ENCODE measurements at regions of chr17 and their contacts with region 1.

Region 1: DNA sequence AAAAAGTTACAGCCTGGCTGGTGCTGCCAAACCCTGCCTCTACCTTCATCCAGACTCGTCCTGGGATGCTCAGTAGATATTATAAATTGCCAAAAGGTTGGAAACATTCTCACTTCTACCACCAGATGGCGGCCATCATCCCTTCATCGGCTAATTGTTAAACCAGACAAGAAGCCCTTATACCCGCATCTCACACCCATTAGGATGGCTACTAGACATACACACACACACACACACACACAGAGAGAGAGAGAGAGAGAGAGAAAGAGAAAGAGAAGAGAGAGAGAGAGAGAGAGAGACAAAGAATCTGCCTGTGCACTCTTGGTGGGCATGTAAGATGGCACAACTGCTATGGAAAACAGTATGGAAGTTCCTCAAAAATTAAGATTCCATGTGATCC is 15.0 kb upstream of the SCIMP start:
- DNase-seq: peak in 4 of 5 donors; percentile 30 to 56 (median 42)
- ATAC-seq: peak in 3 of 4 donors; percentile 58 to 75 (median 68)
- H3K4me3 ChIP-seq: no peak overlapping the region
- H3K27ac ChIP-seq: no peak overlapping the region
- H3K4me1 ChIP-seq: no peaks in the 10 kb centered on the region
- H3K27me3 ChIP-seq: no peaks in the 10 kb centered on the region
- CTCF ChIP-seq: peak; percentile 42 to 71 (median 53)
- POLR2A ChIP-seq: no peak

Region 2: DNA sequence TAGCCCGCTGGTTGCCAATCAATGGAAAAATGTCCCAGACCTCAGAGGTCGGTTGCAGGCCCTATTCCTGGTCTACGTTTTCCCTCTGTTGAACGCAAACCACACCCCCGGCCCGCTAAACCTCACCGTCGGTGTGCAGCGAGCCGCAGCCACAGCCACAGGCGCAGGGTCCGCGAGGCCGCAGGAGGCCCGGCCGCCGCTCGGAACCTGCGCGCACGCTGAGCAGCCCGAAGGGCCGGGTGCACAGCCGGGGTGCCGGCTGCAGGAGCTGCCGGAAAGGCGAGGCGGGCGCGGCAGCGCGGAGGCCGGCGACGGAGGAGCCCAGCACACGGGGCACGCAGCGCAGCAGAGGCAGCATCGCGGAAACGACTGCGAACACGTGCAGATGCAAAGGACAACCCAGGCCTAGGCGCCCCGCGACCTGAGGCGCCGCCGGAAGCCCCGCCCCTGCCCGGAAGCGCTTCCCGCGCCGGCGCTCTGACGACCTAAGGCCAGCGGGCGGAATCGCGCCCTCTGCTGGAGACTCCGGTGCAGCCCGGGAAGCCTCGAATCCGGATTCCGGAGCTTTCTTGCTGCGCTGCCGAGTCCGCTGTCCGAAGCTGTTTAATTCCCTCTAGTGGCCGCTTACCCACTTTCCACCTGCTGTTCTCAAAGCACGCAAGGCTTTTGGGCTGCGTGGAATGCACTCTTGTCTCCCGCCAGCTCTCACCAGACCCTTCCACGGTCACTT is 189.3 kb after region 1 on chr17 and contains the start of gene C1QBP:
- intact Hi-C with region 1: loop called in 4 of 10 experiments (anchors 1 to 10 kb)
- DNase-seq: peak; percentile 90 to 94 (median 92)
- ATAC-seq: peak; percentile 92 to 98 (median 96)
- H3K4me3 ChIP-seq: peak within 1 kb of the TSS; percentile 60 to 100 (median 82)
- H3K27ac ChIP-seq: peak within 1 kb of the TSS; percentile 35 to 86 (median 76)
- H3K4me1 ChIP-seq: peaks cover 0 to 31% (median 13%) of the 10 kb centered on the region in 12 donors
- H3K27me3 ChIP-seq: no peaks in the 10 kb centered on the region
- CTCF ChIP-seq: peak in 11 of 12 donors; percentile 99 to 100 (median 100)
- POLR2A ChIP-seq: peak in 1 of 2 donors; percentile 78
- total RNA-seq, gene C1QBP: 108 to 159 (median 121) TPM

Region 3: GRCh38 chr17:5446786-5447185 is 197.2 kb after region 1 on chr17:
- intact Hi-C with region 1: loop called in 2 of 10 experiments (anchors 10 kb)
- DNase-seq: no peak
- ATAC-seq: no peak
- H3K4me3 ChIP-seq: no peak overlapping the region
- H3K27ac ChIP-seq: no peak overlapping the region
- H3K4me1 ChIP-seq: no peaks in the 10 kb centered on the region
- H3K27me3 ChIP-seq: no peaks in the 10 kb centered on the region
- CTCF ChIP-seq: no peak
- POLR2A ChIP-seq: no peak

Region 4: GRCh38 chr17:6435968-6436367 is 1186.4 kb after region 1 on chr17:
- intact Hi-C with region 1: loop called in 1 of 10 experiments (anchors 10 kb)
- DNase-seq: peak in 4 of 5 donors; percentile 44 to 60 (median 49)
- ATAC-seq: peak; percentile 61 to 95 (median 90)
- H3K4me3 ChIP-seq: no peak overlapping the region
- H3K27ac ChIP-seq: no peak overlapping the region
- H3K4me1 ChIP-seq: no peaks in the 10 kb centered on the region
- H3K27me3 ChIP-seq: peaks cover 0 to 35% (median 16%) of the 10 kb centered on the region in 9 donors
- CTCF ChIP-seq: peak; percentile 65 to 82 (median 76)
- POLR2A ChIP-seq: no peak

Measured in heart left ventricle (tissue), 16 donors.